A673 (cell line): ENCODE measurements at regions of chr18 and their contacts with region 1.

Region 1: DNA sequence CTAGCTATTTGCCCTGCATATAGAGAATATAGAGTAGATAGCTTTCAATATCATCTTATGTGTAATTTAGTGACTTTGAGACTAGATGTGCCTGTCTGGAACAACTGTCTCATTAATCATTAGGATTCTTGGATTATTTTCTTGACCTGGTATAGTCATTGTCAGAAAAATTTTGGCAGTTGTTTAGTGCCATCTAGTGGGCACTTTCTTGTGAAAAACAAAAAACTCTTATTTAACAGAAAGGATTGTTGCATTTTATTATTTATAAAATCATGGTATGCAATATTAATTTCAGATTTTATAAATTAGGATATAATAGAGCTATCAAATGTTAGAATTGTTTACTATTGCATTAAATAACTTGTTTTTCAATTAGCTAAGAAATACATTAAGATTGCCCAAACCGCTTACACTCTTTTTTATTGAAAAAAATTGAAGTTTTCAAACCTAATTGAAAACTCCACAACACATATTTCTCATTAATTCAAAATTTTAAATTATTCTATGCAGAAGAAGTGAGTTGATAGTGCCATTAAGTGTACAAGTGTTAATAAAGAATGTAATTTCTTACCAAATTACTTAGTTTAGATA is 80.3 kb downstream of the DYNAP start:
- DNase-seq: peak; percentile 51
- H3K4me3 ChIP-seq: no peak overlapping the region
- H3K27ac ChIP-seq: no peak overlapping the region
- H3K4me1 ChIP-seq: no peaks in the 10 kb centered on the region
- H3K27me3 ChIP-seq: no peaks in the 10 kb centered on the region
- CTCF ChIP-seq: peak; percentile 66

Region 2: DNA sequence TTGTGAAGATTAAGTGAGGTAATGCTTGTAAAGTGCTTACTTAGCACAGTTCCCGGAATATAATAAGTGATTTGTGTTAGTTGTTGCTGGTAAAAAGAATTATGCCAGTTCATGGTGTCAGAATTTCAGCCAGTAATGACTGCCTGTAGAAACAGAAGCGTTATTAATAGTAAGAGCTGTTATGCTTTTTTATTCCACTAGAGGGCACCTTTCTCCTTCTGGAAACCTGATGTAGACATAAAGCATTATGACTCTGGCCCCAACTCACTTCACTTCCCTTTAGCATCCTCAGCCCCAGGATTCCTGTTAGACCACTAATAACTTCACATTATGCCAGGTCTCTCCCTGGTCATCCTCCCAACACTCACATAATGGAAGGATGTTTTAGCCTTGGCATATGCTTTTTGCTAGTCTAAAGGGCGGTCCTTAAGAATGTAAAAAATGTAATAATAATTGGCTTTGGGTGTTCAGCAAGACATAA is 278.8 kb before region 1 on chr18:
- CTCF ChIA-PET with region 1: interaction called, 3 read pairs
- POLR2A ChIA-PET with region 1: no interaction called
- intact Hi-C with region 1: loop called (anchors 5 kb)
- DNase-seq: peak; percentile 82
- H3K4me3 ChIP-seq: no peak overlapping the region
- H3K27ac ChIP-seq: no peak overlapping the region
- H3K4me1 ChIP-seq: peaks cover 15% of the 10 kb centered on the region
- H3K27me3 ChIP-seq: no peaks in the 10 kb centered on the region
- CTCF ChIP-seq: peak; percentile 76

Region 3: DNA sequence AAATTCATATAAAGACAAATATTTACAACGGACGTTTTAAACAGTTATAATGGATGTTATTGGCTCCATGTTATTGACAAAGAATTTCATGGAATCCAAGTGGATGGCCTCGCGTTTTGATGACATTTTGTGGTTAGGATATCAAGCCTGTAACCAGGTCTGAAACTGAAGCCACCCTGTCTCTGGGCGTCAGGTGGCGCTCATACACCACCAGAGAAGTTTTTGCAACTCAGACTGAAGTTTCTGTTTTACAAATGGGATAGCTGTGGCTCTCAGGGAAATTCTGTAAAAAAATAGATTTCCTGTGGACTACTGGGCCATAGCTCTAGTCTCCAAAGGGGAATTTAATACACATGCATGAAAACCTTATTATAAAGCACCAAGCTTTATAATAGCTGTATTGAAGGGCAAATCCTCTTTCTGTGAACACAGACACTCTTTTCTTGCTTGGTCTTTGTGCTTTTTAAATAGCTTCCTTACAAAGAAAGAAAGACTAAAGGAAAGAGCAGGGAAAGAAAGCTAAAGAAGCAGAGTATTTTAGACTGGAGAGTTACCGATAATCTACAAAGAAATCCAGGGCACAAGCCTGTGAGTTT is 227.0 kb before region 1 on chr18:
- CTCF ChIA-PET with region 1: interaction called, 5 read pairs
- POLR2A ChIA-PET with region 1: no interaction called
- intact Hi-C with region 1: loop called (anchors 1 kb)
- DNase-seq: peak; percentile 75
- H3K4me3 ChIP-seq: no peak overlapping the region
- H3K27ac ChIP-seq: no peak overlapping the region
- H3K4me1 ChIP-seq: no peaks in the 10 kb centered on the region
- H3K27me3 ChIP-seq: peaks cover 7% of the 10 kb centered on the region
- CTCF ChIP-seq: peak; percentile 83